Activated CD4-positive, alpha-beta memory T cell treated with anti-CD3 and anti-CD28 coated beads for 36 hours (primary cell): ENCODE measurements at regions of chr19 and their contacts with region 1.

Region 1: GRCh38 chr19:51660975-51661600 is 14.5 kb upstream of the SIGLEC14 start:
- DNase-seq: peak; percentile 80
- H3K4me3 Mint-ChIP-seq: no peak overlapping the region
- H3K27ac Mint-ChIP-seq: no peak overlapping the region
- H3K4me1 Mint-ChIP-seq: peaks cover 5% of the 10 kb centered on the region
- H3K27me3 Mint-ChIP-seq: peaks cover 15% of the 10 kb centered on the region

Region 2: GRCh38 chr19:51158474-51159129 is 502.5 kb before region 1 on chr19:
- CTCF ChIA-PET with region 1: interaction called, 22 read pairs
- POLR2A ChIA-PET with region 1: no interaction called
- intact Hi-C with region 1: no loop called
- DNase-seq: peak; percentile 86
- H3K4me3 Mint-ChIP-seq: no peak overlapping the region
- H3K27ac Mint-ChIP-seq: no peak overlapping the region
- H3K4me1 Mint-ChIP-seq: peaks cover 6% of the 10 kb centered on the region
- H3K27me3 Mint-ChIP-seq: peaks cover 5% of the 10 kb centered on the region

Region 3: DNA sequence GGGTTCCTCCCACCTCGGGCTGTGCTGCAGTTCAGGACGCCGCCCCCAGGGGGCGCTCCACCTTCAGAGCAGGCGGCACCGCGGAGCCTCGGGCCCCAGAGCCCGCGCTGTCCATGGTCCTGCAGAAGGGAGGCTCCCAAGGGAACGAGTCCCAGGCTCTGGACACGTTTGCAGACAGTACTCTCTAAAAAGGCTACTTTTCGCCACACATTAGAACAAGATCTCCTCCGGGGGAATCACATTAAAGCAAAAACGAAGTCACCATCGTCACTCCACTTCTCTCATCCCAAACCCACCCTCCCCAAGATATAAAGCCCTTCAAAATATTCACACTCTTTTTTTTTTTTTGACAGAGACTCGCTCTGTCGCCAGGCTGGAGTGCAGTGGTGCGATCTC is 239.0 kb before region 1 on chr19:
- CTCF ChIA-PET with region 1: interaction called, 18 read pairs
- POLR2A ChIA-PET with region 1: no interaction called
- intact Hi-C with region 1: loop called (anchors 5 kb)
- DNase-seq: peak; percentile 91
- H3K4me3 Mint-ChIP-seq: no peak overlapping the region
- H3K27ac Mint-ChIP-seq: no peak overlapping the region
- H3K4me1 Mint-ChIP-seq: peaks cover 18% of the 10 kb centered on the region
- H3K27me3 Mint-ChIP-seq: peaks cover 18% of the 10 kb centered on the region

Region 4: GRCh38 chr19:51644636-51645271 is 16.3 kb before region 1 on chr19:
- CTCF ChIA-PET with region 1: interaction called, 15 read pairs
- POLR2A ChIA-PET with region 1: no interaction called
- intact Hi-C with region 1: no loop called
- DNase-seq: no peak
- H3K4me3 Mint-ChIP-seq: no peak overlapping the region
- H3K27ac Mint-ChIP-seq: no peak overlapping the region
- H3K4me1 Mint-ChIP-seq: no peaks in the 10 kb centered on the region
- H3K27me3 Mint-ChIP-seq: peaks cover 29% of the 10 kb centered on the region

Region 5: DNA sequence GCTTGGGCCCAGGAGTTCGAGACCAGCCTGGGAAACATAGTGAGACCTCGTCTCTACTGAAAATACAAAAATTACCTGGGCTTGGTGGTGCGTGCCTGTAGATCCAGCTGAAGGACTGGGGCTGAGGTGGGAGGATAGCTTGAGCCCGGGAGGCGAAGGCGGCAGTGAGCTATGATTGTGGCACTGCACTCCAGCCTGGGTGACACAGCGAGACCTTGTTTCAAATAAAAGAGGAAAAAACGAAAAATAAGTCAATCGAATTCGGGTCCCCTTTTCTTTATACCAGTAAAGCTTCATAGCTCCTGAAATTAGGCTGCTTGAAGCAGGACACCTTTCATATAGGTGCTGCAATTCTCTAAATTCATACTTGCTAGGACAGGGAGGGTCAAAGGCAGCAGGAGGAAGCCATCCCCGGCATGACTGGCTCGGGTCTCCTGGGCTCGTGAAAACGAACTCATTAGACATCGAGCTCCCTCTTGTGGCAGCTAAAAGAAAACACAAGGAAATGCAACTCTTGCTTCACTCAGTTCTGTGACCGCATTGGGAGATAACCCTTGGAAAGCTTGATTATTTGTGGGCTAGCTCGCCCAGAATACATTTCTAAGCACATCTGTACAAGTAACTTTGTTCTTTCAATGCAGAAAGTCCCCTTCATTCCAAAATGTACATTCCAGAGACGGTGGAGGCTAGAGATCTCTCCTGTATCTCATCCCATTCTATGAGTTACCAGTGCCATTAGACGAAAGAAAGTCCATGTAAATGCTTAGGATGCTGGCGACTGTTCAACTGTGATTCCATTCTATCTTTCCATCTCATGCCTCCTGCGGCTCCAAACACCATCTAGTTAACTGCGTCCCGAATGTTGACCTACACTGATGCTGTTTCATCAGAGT is 116.7 kb after region 1 on chr19:
- CTCF ChIA-PET with region 1: interaction called, 11 read pairs
- POLR2A ChIA-PET with region 1: no interaction called
- intact Hi-C with region 1: loop called (anchors 10 kb)
- DNase-seq: peak; percentile 45
- H3K4me3 Mint-ChIP-seq: no peak overlapping the region
- H3K27ac Mint-ChIP-seq: no peak overlapping the region
- H3K4me1 Mint-ChIP-seq: peaks cover 3% of the 10 kb centered on the region
- H3K27me3 Mint-ChIP-seq: peaks cover 29% of the 10 kb centered on the region